ENCODE measurements at regions of chr17 and their contacts with region 1.

Region 1: GRCh38 chr17:35141681-35142466 is at the start of gene NLE1:
- DNase-seq: peak; percentile 86
- H3K4me3 ChIP-seq: peak within 1 kb of the TSS; percentile 99
- H3K27ac ChIP-seq: peak within 1 kb of the TSS; percentile 19
- H3K4me1 ChIP-seq: peaks cover 16% of the 10 kb centered on the region
- CTCF ChIP-seq: peak; percentile 81
- total RNA-seq, gene NLE1: 30.3 and 32.2 TPM in 2 replicates

Region 2: GRCh38 chr17:35242805-35243560 is 101.1 kb after region 1 on chr17 and contains the start of gene SLFN5:
- CTCF ChIA-PET with region 1: no interaction called
- POLR2A ChIA-PET with region 1: no interaction called
- intact Hi-C with region 1: loop called (anchors 2 kb)
- DNase-seq: peak; percentile 85
- H3K4me3 ChIP-seq: peak within 1 kb of the TSS; percentile 75
- H3K27ac ChIP-seq: peak within 1 kb of the TSS; percentile 8
- H3K4me1 ChIP-seq: peaks cover 26% of the 10 kb centered on the region
- CTCF ChIP-seq: no peak
- total RNA-seq, gene SLFN5: 0.10 and 0.38 TPM in 2 replicates

Measured in OCI-LY7 (cell line).